ENCODE measurements at regions of chr10 and their contacts with region 1.

Region 1: DNA sequence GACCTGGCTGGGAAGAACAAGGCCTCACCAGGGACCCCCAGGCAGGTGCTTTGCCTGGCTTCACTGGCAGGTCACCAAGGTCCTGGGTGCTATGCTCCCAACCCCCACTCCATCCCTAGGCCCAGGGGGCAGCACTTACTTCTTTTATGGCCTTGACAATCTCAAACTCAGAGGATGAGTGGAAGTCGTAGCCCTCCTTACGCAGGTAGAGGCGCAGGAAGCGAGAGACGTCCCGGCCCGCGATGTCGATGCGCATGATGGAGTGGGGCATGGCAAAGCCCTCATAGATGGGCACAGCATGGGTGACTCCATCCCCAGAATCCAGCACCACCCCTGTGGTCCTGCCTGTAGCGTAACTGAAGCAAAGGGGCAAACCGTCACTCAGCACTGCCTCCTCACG is 18.5 kb downstream of the ACTR1A start:
- DNase-seq: no peak
- ATAC-seq: no peak
- H3K4me3 ChIP-seq: no peak overlapping the region
- H3K27ac ChIP-seq: no peak overlapping the region
- H3K4me1 ChIP-seq: no peaks in the 10 kb centered on the region
- CTCF ChIP-seq: no peak
- EP300 ChIP-seq: no peak
- POLR2A ChIP-seq: no peak
- RAD21 ChIP-seq: no peak

Region 2: DNA sequence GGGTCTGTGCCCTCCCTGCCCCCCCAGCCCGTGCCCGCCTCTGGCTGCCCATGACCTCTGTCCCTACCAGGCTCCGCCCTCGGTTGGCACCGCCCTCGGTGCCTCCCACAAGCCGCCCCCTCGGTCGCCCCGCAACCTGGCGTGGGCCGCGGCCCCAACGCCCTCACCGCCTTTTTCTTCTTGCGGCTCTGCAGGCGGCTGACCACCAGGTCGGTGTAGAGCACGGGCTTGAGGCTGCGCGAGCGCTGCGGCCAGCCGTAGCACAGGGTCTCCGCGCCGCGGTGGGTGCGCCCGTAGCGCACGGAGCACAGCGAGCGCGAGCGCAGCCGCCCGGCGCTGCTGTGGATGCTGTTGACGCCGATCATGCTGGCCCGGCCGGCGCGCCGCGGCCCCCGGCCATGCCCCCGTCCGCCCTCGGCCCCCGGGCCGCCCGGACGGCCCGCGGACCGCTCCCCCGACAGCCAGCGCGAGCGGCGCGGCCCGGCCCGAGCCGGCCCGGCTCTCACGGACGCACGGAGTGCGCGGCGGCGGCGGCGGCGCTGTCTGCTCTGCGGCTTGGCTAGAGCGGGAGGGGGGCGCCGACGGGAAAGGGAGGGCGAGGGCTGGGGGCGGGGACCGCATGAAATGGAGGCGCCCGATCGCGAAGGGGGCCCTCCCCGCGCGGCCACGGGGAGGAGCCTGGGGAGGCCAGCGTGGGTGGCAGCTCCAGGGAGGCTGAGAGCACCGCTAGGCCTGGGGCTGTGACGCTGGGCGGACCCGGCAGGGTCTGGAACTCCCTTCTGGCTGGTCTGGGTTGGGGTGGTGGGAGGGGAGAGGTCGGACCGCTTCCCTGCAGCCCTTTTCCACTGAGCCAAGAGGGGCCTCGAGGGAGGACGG is 75.1 kb before region 1 on chr10:
- CTCF ChIA-PET with region 1: interaction called, 30 read pairs
- POLR2A ChIA-PET with region 1: no interaction called
- DNase-seq: no peak
- ATAC-seq: peak; percentile 9 to 15; a peak in 4 of 6 replicates
- H3K4me3 ChIP-seq: peak overlapping the region; percentile 65
- H3K27ac ChIP-seq: peak overlapping the region; percentile 36 to 73; a peak in 4 of 6 replicates
- H3K4me1 ChIP-seq: peaks cover 3% of the 10 kb centered on the region; the same call in 1 of the 3 replicates
- CTCF ChIP-seq: no peak
- EP300 ChIP-seq: no peak
- POLR2A ChIP-seq: no peak
- RAD21 ChIP-seq: no peak

Region 3: GRCh38 chr10:102432162-102432950 is 51.7 kb before region 1 on chr10 and contains the start of gene CUEDC2:
- CTCF ChIA-PET with region 1: interaction called, 15 read pairs
- POLR2A ChIA-PET with region 1: no interaction called
- DNase-seq: peak; percentile 96 to 97
- ATAC-seq: peak; percentile 95 to 96
- H3K4me3 ChIP-seq: peak within 1 kb of the TSS; percentile 87
- H3K27ac ChIP-seq: peak within 1 kb of the TSS; percentile 92 to 95
- H3K4me1 ChIP-seq: peaks cover 14% of the 10 kb centered on the region
- CTCF ChIP-seq: no peak
- EP300 ChIP-seq: no peak
- POLR2A ChIP-seq: peak; percentile 63; the same call in 1 of the 2 replicates
- RAD21 ChIP-seq: no peak; a peak in 1 of 5 replicates
- polyA plus RNA-seq, gene CUEDC2: 42.5 and 43.7 TPM in 2 replicates

Region 4: DNA sequence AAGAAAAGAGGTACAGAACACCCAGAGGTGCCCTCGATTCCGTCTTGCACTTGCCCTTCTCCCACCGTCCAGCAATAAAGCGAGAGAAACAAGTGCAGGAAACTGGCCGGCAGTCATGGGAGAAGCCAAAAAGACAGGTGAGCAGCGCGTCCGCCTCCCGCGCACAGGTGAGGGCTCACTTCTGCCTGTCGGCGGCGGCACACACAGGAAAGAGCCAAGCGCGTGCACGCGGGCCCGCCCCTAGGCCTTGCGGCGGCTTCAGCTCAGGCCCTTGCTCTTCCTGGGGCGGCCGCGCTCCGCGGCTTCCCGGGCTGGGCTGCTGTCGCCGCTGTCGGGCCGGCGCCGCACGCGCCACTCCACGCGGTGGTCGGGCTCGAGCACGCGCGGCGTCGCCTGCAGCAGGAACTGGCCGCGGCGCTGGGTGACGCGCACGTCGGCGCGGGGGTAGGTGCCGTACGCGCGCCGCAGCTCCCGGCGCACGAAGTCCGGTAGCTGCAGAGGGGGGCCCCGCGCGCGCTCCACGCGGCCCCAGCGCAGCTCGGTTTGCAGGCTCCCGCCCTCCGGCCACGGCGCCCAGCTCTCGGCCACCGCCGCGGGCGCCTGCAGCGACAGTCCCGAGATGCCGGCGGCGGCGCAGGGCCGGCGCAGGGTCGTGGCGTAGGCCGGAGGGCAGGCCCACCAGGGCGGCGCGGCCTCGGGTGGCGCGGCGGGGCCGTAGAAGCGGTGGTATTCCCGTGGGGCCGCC is 33.7 kb before region 1 on chr10:
- CTCF ChIA-PET with region 1: interaction called, 20 read pairs
- POLR2A ChIA-PET with region 1: interaction called, 8 read pairs
- DNase-seq: peak; percentile 74 to 79
- ATAC-seq: peak; percentile 78 to 79
- H3K4me3 ChIP-seq: peak overlapping the region; percentile 97
- H3K27ac ChIP-seq: peak overlapping the region; percentile 89 to 95
- H3K4me1 ChIP-seq: peaks cover 44% of the 10 kb centered on the region
- CTCF ChIP-seq: no peak
- EP300 ChIP-seq: no peak
- POLR2A ChIP-seq: peak; percentile 75
- RAD21 ChIP-seq: no peak

Region 5: GRCh38 chr10:102467971-102468438 is 16.0 kb before region 1 on chr10:
- CTCF ChIA-PET with region 1: interaction called, 84 read pairs
- POLR2A ChIA-PET with region 1: no interaction called
- DNase-seq: no peak
- ATAC-seq: peak in 1 of 2 experiments; percentile 34; a peak in 1 of 6 replicates
- H3K4me3 ChIP-seq: no peak overlapping the region
- H3K27ac ChIP-seq: no peak overlapping the region
- H3K4me1 ChIP-seq: no peaks in the 10 kb centered on the region
- CTCF ChIP-seq: no peak
- EP300 ChIP-seq: no peak
- POLR2A ChIP-seq: no peak
- RAD21 ChIP-seq: no peak

Region 6: GRCh38 chr10:102503281-102504220 is 19.5 kb after region 1 on chr10 and contains the start of gene SUFU:
- CTCF ChIA-PET with region 1: interaction called, 43 read pairs
- POLR2A ChIA-PET with region 1: interaction called, 3 read pairs
- DNase-seq: peak; percentile 88 to 99
- ATAC-seq: peak; percentile 64 to 79
- H3K4me3 ChIP-seq: peak within 1 kb of the TSS; percentile 82
- H3K27ac ChIP-seq: peak within 1 kb of the TSS; percentile 87 to 95
- H3K4me1 ChIP-seq: peaks cover 17% of the 10 kb centered on the region; the same call in 2 of the 3 replicates
- CTCF ChIP-seq: peak; percentile 88
- EP300 ChIP-seq: no peak
- POLR2A ChIP-seq: peak; percentile 96
- RAD21 ChIP-seq: peak; percentile 75 to 78
- polyA plus RNA-seq, gene SUFU: 3.7 and 4.5 TPM in 2 replicates

Measured in A549 (cell line).